Activated B cell treated with CpG ODN at 0.5 μM for 24 hours (primary cell): ENCODE measurements at regions of chr19 and their contacts with region 1.

Region 1: GRCh38 chr19:51904331-51905165 is at the start of gene ZNF649:
- DNase-seq: peak; percentile 68
- ATAC-seq: peak; percentile 95
- H3K4me3 Mint-ChIP-seq: peak within 1 kb of the TSS; percentile 99
- H3K27ac Mint-ChIP-seq: peak within 1 kb of the TSS; percentile 98
- H3K4me1 Mint-ChIP-seq: peaks cover 24% of the 10 kb centered on the region
- H3K27me3 Mint-ChIP-seq: peaks cover 15% of the 10 kb centered on the region
- CTCF ChIP-seq: no peak
- total RNA-seq, gene ZNF649: 21.9 and 27.4 TPM in 2 replicates

Region 2: DNA sequence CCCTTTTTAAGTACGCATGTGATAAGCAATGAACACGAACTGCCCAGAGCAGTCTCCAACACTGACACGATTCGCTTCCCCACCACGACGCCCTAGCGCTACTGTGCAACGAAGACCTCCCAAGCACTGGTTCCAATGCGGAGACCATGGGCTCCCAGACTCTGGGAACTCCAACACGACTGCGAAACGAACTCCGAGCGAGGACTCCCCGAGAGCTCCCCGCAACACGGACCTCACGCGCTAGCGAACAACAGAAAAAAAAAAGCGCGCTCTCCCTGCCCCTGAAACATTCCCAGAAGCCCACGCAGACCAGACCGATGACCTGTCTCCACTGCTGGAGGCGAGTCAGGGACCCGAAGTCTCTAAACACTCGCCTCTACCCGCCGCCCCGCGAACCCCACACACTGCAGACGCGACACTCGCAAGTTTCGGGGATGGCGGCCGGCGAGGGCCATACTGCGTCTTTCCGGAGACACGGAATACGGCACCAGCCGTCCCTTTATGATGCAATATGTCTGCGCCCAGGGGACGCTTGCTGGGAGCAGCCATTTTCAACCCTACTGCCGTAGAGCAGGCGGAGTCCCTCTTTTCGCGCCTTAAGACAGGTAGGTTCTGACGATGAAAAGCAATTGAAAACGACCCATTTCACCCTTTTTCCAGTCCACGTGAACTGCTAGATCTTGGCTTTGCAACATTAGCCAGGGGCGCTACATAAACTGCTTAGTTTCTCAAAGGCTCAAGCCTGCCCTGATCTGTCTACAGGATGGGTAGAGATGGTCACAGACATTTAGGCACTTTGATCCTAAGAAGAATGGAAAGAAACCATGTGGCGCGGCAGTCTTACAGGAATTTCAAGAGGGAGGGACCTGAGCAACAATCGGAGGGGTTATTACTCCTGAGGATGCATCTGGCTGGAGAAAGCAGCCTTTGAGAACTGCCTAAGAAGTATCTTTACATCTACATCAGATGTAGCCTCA is 16.7 kb before region 1 on chr19 and contains the start of gene ZNF577:
- CTCF ChIA-PET with region 1: no interaction called
- POLR2A ChIA-PET with region 1: no interaction called
- intact Hi-C with region 1: loop called (anchors 2 kb)
- DNase-seq: peak; percentile 44
- ATAC-seq: peak; percentile 93
- H3K4me3 Mint-ChIP-seq: peak within 1 kb of the TSS; percentile 94
- H3K27ac Mint-ChIP-seq: peak within 1 kb of the TSS; percentile 89
- H3K4me1 Mint-ChIP-seq: peaks cover 5% of the 10 kb centered on the region
- H3K27me3 Mint-ChIP-seq: no peaks in the 10 kb centered on the region
- CTCF ChIP-seq: no peak
- total RNA-seq, gene ZNF577: 13.2 and 13.9 TPM in 2 replicates

Region 3: GRCh38 chr19:52007806-52008557 is 103.4 kb after region 1 on chr19 and contains the start of gene ZNF615:
- CTCF ChIA-PET with region 1: no interaction called
- POLR2A ChIA-PET with region 1: no interaction called
- intact Hi-C with region 1: loop called (anchors 5 kb)
- DNase-seq: peak; percentile 85
- ATAC-seq: peak; percentile 94
- H3K4me3 Mint-ChIP-seq: peak within 1 kb of the TSS; percentile 93
- H3K27ac Mint-ChIP-seq: peak within 1 kb of the TSS; percentile 99
- H3K4me1 Mint-ChIP-seq: peaks cover 18% of the 10 kb centered on the region
- H3K27me3 Mint-ChIP-seq: no peaks in the 10 kb centered on the region
- CTCF ChIP-seq: no peak
- total RNA-seq, gene ZNF615: 9.1 and 13.5 TPM in 2 replicates